Endothelial cell of umbilical vein (primary cell): ENCODE measurements at regions of chr15 and their contacts with region 1.

Region 1: DNA sequence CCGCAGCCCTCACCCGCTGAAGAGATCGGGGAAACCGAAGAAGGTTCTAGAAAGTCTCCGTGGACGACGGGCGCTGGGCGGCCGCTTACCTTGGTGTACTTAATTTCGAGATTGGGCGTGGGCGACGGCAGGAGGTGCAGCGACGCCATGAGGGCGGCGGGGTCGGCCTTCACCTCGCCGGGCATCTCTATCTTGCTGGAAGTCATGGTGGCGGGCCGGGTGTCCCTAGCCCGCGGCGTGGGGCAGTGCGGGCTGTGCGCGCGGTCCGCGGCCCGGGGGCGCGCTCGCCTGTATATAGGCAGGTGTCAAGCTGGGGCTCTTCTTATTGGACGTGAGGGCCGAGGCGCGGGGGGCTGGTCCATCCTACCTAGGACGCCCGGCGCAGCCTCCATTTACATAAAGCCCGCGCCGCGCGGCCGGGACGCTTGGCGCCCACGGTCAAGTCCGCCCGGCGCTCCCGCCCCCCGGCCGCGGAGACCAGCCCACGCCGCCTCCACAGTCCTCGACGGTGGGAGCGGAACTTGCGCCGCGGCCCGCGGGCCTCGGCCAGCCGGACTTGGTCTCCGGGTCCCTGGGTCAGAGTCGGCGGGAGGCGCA is at the start of gene ALDH1A2:
- DNase-seq: peak; percentile 72
- H3K4me3 ChIP-seq: peak within 1 kb of the TSS; percentile 61 to 92 (median 80)
- H3K27ac ChIP-seq: peak within 1 kb of the TSS; percentile 70
- H3K4me1 ChIP-seq: peaks cover 20% of the 10 kb centered on the region
- H3K27me3 ChIP-seq: no peaks in the 10 kb centered on the region
- CTCF ChIP-seq: no peak
- POLR2A ChIP-seq: no peak
- total RNA-seq, gene ALDH1A2: 11.7 and 34.9 TPM in 2 replicates

Region 2: DNA sequence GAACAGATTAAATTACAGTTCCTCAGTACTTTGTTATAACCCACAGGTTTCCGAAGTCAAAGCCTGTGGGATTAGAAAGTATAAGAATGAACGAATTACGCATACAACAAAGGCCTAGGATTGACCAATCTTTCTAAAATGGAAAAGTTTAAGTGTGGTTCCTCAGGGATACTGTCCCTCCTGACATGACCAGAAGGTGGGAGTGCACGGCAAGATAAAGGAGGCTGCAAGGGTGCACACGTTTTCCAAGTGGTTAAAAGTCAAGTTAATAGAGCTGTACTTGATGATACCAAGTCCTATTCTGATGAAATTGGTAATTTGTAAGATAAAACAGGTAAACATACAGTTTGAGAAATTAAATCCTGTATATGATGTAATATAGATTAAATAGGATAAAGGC is 96.2 kb before region 1 on chr15:
- CTCF ChIA-PET with region 1: interaction called, 83 read pairs
- POLR2A ChIA-PET with region 1: no interaction called
- dilution Hi-C with region 1: no loop called
- intact Hi-C with region 1: loop called (anchors 1 kb)
- DNase-seq: peak; percentile 46
- H3K4me3 ChIP-seq: no peak overlapping the region
- H3K27ac ChIP-seq: no peak overlapping the region
- H3K4me1 ChIP-seq: no peaks in the 10 kb centered on the region
- H3K27me3 ChIP-seq: no peaks in the 10 kb centered on the region
- CTCF ChIP-seq: peak in 1 of 2 donors; percentile 19
- POLR2A ChIP-seq: no peak

Region 3: DNA sequence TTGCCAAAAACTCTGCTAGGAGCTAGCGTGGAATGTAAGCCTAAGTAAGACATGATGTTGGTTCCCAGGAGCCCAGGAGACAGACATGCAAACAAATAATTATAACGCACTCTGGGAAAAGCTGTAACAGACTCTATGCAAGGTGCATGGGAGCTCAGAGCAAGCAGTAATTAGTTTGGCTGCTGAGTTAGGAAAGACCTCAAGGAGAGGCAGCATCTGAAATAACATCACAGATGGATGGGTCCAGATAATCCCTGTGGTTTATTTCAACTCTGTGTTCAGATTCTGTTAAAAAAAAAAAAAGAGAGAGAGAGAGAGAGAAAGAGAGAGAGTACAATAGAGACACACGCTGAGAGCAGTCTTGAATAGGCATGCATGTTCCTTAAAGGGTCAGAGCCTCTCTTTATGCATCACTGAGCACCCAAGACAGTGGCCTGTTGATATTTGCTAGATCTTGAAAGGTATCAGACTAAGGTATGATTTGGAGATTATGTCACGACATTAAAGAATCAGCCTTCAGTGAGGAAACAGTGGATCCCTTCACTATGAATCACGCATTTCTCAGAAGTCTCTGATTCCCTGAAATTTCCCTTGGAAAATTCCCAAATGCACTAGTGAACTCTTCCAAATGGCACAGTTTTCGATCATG is 241.9 kb after region 1 on chr15:
- CTCF ChIA-PET with region 1: no interaction called
- POLR2A ChIA-PET with region 1: no interaction called
- dilution Hi-C with region 1: no loop called
- intact Hi-C with region 1: no loop called
- DNase-seq: no peak
- H3K4me3 ChIP-seq: no peak overlapping the region
- H3K27ac ChIP-seq: no peak overlapping the region
- H3K4me1 ChIP-seq: peaks cover 9% of the 10 kb centered on the region
- H3K27me3 ChIP-seq: peaks cover 0 to under 1% of the 10 kb centered on the region in 2 experiments
- CTCF ChIP-seq: no peak
- POLR2A ChIP-seq: no peak